ENCODE measurements at regions of chr6 and their contacts with region 1.

Region 1: GRCh38 chr6:118709859-118710350 is 58.5 kb upstream of the CEP85L start:
- DNase-seq: peak; percentile 34 to 93 (median 70)
- ATAC-seq: peak; percentile 89
- H3K4me3 ChIP-seq: peak overlapping the region; percentile 85 to 86
- H3K4me3 Mint-ChIP-seq: peak overlapping the region; percentile 91
- H3K27ac ChIP-seq: peak overlapping the region; percentile 84 to 89
- H3K27ac Mint-ChIP-seq: peak overlapping the region; percentile 93
- H3K4me1 ChIP-seq: peaks cover 64% of the 10 kb centered on the region
- H3K4me1 Mint-ChIP-seq: peaks cover 68% of the 10 kb centered on the region
- H3K27me3 ChIP-seq: no peaks in the 10 kb centered on the region
- H3K27me3 Mint-ChIP-seq: no peaks in the 10 kb centered on the region
- CTCF ChIP-seq: no peak

Region 2: GRCh38 chr6:118524686-118525085 is 185.2 kb before region 1 on chr6:
- CTCF ChIA-PET with region 1: no interaction called
- POLR2A ChIA-PET with region 1: no interaction called
- intact Hi-C with region 1: no loop called
- DNase-seq: peak in 3 of 9 experiments; percentile 6 to 46 (median 20)
- ATAC-seq: peak; percentile 36
- H3K4me3 ChIP-seq: no peak overlapping the region
- H3K4me3 Mint-ChIP-seq: no peak overlapping the region
- H3K27ac ChIP-seq: no peak overlapping the region
- H3K27ac Mint-ChIP-seq: no peak overlapping the region
- H3K4me1 ChIP-seq: no peaks in the 10 kb centered on the region
- H3K4me1 Mint-ChIP-seq: peaks cover 42% of the 10 kb centered on the region
- H3K27me3 ChIP-seq: no peaks in the 10 kb centered on the region
- H3K27me3 Mint-ChIP-seq: no peaks in the 10 kb centered on the region
- CTCF ChIP-seq: no peak

Region 3: GRCh38 chr6:118558464-118559217 is 151.3 kb before region 1 on chr6:
- CTCF ChIA-PET with region 1: interaction called, 3 read pairs
- POLR2A ChIA-PET with region 1: interaction called, 6 read pairs
- intact Hi-C with region 1: loop called in 1 of 2 experiments (anchors 5 kb)
- DNase-seq: peak in 5 of 9 experiments; percentile 11 to 80 (median 45)
- ATAC-seq: peak; percentile 90
- H3K4me3 ChIP-seq: peak overlapping the region; percentile 16 to 18
- H3K4me3 Mint-ChIP-seq: peak overlapping the region; percentile 73
- H3K27ac ChIP-seq: peak overlapping the region; percentile 67 to 78
- H3K27ac Mint-ChIP-seq: peak overlapping the region; percentile 97
- H3K4me1 ChIP-seq: peaks cover 23% of the 10 kb centered on the region
- H3K4me1 Mint-ChIP-seq: peaks cover 58% of the 10 kb centered on the region
- H3K27me3 ChIP-seq: no peaks in the 10 kb centered on the region
- H3K27me3 Mint-ChIP-seq: no peaks in the 10 kb centered on the region
- CTCF ChIP-seq: no peak

Region 4: DNA sequence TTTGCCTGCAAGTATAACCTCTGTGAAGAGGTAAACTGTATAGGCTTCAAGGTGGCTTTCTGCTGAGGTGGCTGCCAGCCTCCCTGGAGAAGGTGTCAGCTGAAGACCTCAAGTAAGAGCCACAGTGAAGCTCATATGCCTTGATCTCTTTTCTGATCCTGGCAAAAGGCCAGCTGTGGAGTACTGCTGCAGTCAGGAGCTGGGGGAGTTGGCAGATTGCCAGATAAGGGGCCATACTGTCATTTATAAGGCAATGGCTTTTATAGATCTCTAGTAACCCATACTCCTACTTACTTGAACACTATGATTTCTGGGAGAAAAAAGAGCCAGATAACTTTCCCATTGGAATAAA is 49.7 kb before region 1 on chr6:
- CTCF ChIA-PET with region 1: no interaction called
- POLR2A ChIA-PET with region 1: interaction called, 11 read pairs
- intact Hi-C with region 1: no loop called
- DNase-seq: peak; percentile 24 to 88 (median 67)
- ATAC-seq: peak; percentile 76
- H3K4me3 ChIP-seq: no peak overlapping the region
- H3K4me3 Mint-ChIP-seq: peak overlapping the region; percentile 40
- H3K27ac ChIP-seq: no peak overlapping the region
- H3K27ac Mint-ChIP-seq: peak overlapping the region; percentile 86
- H3K4me1 ChIP-seq: peaks cover 51% of the 10 kb centered on the region
- H3K4me1 Mint-ChIP-seq: peaks cover 69% of the 10 kb centered on the region
- H3K27me3 ChIP-seq: no peaks in the 10 kb centered on the region
- H3K27me3 Mint-ChIP-seq: no peaks in the 10 kb centered on the region
- CTCF ChIP-seq: no peak

Region 5: DNA sequence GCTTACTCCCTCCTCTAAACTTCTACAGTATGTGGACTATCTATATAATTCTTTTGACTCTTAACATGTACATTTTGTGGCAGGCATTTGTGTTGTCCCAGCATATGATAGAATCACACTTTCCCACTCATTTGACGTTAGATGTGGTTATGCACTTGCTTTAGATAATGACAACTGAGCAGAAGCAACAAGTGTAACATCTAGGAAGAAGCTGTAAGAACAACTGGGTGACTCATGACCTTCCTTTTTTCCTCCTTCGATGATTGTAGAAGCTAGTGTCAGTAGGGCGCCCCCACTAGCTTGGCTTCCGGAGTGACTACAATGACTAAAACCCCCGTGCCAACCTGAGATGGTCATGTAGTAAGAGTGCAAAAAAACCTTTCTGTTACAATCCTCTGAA is 16.0 kb after region 1 on chr6:
- CTCF ChIA-PET with region 1: interaction called, 9 read pairs
- POLR2A ChIA-PET with region 1: interaction called, 65 read pairs
- intact Hi-C with region 1: loop called in 1 of 2 experiments (anchors 1 kb)
- DNase-seq: peak in 8 of 9 experiments; percentile 52 to 88 (median 74)
- ATAC-seq: peak; percentile 92
- H3K4me3 ChIP-seq: no peak overlapping the region
- H3K4me3 Mint-ChIP-seq: peak overlapping the region; percentile 38
- H3K27ac ChIP-seq: peak overlapping the region in 1 of 2 experiments; percentile 36
- H3K27ac Mint-ChIP-seq: peak overlapping the region; percentile 82
- H3K4me1 ChIP-seq: peaks cover 49% of the 10 kb centered on the region
- H3K4me1 Mint-ChIP-seq: peaks cover 67% of the 10 kb centered on the region
- H3K27me3 ChIP-seq: no peaks in the 10 kb centered on the region
- H3K27me3 Mint-ChIP-seq: no peaks in the 10 kb centered on the region
- CTCF ChIP-seq: peak; percentile 33

Region 6: DNA sequence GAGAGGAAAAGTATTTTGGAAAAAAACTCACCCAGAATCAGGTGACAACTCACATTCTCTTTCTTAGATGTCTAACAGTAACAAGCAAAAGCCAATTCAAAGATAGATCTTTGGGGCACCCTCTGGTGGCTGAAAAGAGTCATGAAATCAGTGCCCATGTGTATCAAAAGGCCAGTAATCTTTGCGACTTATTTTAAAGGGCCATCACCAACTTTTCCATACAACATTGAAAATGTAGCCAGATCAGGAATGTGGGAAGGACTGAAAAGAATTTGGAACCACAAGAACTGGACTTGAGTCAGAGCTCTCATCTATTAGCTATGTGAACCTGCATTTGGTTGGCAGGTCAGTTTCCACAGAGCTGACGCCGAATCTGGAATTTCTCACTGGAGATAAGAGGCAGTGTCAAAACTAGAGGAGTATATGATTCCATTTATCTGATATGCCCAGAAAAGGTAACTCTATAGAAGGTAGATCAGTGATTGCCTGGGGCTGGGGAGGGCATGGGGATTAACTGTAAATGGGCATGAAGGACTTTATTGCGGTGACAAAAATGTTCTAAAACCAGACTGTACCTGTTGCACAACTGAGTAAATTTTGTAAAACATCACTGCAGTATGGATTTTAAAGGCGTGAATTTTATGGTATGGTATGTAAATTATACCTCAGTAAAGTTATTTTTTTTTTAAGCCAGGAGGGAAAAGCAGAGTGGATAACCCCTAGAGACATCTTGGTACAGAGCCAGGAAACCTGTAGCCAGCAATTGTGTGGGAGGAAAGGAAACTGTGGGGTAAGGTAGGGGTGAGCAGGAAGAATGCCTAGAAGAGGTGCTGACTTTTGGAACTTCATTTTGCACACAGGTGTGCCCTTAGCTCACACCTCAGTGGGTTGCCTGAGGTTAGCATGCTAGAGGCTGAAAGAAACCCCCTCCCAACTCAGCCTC is 67.0 kb after region 1 on chr6:
- CTCF ChIA-PET with region 1: interaction called, 5 read pairs
- POLR2A ChIA-PET with region 1: interaction called, 4 read pairs
- intact Hi-C with region 1: loop called in 1 of 2 experiments (anchors 2 kb)
- DNase-seq: peak; percentile 32 to 82 (median 61)
- ATAC-seq: peak; percentile 89
- H3K4me3 ChIP-seq: no peak overlapping the region
- H3K4me3 Mint-ChIP-seq: no peak overlapping the region
- H3K27ac ChIP-seq: no peak overlapping the region
- H3K27ac Mint-ChIP-seq: peak overlapping the region; percentile 38
- H3K4me1 ChIP-seq: peaks cover 20% of the 10 kb centered on the region
- H3K4me1 Mint-ChIP-seq: peaks cover 28% of the 10 kb centered on the region
- H3K27me3 ChIP-seq: no peaks in the 10 kb centered on the region
- H3K27me3 Mint-ChIP-seq: no peaks in the 10 kb centered on the region
- CTCF ChIP-seq: peak; percentile 82

Region 7: DNA sequence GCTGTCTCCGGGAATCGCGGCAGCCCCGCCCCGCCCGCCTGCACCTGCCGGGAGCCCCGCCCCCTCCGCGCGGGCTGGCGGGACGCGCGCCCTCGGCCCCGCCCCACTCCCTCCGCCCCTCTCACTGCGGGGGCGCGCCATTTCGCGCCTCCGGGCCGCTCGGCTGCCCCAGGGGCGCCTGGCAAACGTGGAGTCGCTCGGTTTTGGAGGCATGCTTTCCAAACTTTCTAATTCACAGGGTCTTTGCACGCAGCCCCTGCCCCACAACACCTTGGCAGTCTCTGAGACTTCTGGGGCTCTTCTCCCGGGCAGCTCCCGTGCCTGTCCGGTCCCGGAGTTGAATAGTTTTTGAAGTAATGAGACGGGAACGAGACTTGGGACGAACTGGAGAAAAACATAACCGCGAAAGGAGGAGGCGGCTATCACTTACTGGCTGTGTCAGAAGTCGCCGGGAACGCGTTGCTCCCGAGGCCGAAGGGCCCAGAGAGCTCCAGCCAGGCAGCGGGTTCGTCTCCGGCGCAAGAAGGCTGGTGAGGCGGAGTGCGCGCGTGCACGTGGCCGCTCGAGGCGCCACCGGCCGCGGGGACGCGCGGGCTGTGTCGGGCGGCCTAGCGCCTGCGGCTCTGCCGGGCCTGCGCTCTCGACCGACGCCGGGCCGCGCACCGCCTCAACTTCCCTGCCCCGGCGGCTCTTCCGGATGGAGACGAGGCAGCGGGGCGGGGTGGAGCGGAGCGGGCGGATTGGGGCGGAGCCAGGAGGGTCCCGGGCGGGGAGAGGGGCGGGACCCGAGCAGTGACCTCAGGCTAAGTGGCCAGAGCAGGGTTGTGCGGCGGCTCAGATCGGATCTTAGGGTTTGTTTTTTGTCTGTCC is 224.8 kb after region 1 on chr6 and contains the start of gene MCM9:
- CTCF ChIA-PET with region 1: no interaction called
- POLR2A ChIA-PET with region 1: no interaction called
- intact Hi-C with region 1: loop called (anchors 5 to 10 kb)
- DNase-seq: peak; percentile 76 to 95 (median 84)
- ATAC-seq: peak; percentile 87
- H3K4me3 ChIP-seq: peak within 1 kb of the TSS; percentile 96 to 97
- H3K4me3 Mint-ChIP-seq: peak within 1 kb of the TSS; percentile 91
- H3K27ac ChIP-seq: peak within 1 kb of the TSS; percentile 87 to 89
- H3K27ac Mint-ChIP-seq: peak within 1 kb of the TSS; percentile 90
- H3K4me1 ChIP-seq: peaks cover 7% of the 10 kb centered on the region
- H3K4me1 Mint-ChIP-seq: peaks cover 43% of the 10 kb centered on the region
- H3K27me3 ChIP-seq: no peaks in the 10 kb centered on the region
- H3K27me3 Mint-ChIP-seq: no peaks in the 10 kb centered on the region
- CTCF ChIP-seq: no peak
- total RNA-seq, gene MCM9: 32.9 to 34.1 TPM

Region 8: GRCh38 chr6:120569714-120570113 is 1859.8 kb after region 1 on chr6:
- CTCF ChIA-PET with region 1: no interaction called
- POLR2A ChIA-PET with region 1: no interaction called
- intact Hi-C with region 1: no loop called
- DNase-seq: no peak
- ATAC-seq: no peak
- H3K4me3 ChIP-seq: no peak overlapping the region
- H3K4me3 Mint-ChIP-seq: no peak overlapping the region
- H3K27ac ChIP-seq: no peak overlapping the region
- H3K27ac Mint-ChIP-seq: no peak overlapping the region
- H3K4me1 ChIP-seq: no peaks in the 10 kb centered on the region
- H3K4me1 Mint-ChIP-seq: no peaks in the 10 kb centered on the region
- H3K27me3 ChIP-seq: no peaks in the 10 kb centered on the region
- H3K27me3 Mint-ChIP-seq: no peaks in the 10 kb centered on the region
- CTCF ChIP-seq: no peak